H1 (cell line): ENCODE measurements at regions of chr6 and their contacts with region 1.

Region 1: GRCh38 chr6:6772751-6773150 is 184.2 kb downstream of the LY86 start:
- DNase-seq: peak in 1 of 2 experiments; percentile 53
- H3K4me3 ChIP-seq: no peak overlapping the region
- H3K27ac ChIP-seq: no peak overlapping the region
- H3K4me1 ChIP-seq: peaks cover 0 to 2% (median 0%) of the 10 kb centered on the region in 4 experiments; a peak in 2 of 7 replicates
- H3K27me3 ChIP-seq: no peaks in the 10 kb centered on the region
- CTCF ChIP-seq: no peak
- EP300 ChIP-seq: no peak
- POLR2A ChIP-seq: no peak
- RAD21 ChIP-seq: no peak

Region 2: GRCh38 chr6:6758915-6759654 is 13.7 kb before region 1 on chr6:
- CTCF ChIA-PET with region 1: interaction called, 12 read pairs
- POLR2A ChIA-PET with region 1: interaction called, 4 read pairs
- DNase-seq: peak in 1 of 2 experiments; percentile 74
- H3K4me3 ChIP-seq: peak overlapping the region; percentile 18 to 46 (median 30); a peak in 7 of 8 replicates
- H3K27ac ChIP-seq: peak overlapping the region; percentile 65
- H3K4me1 ChIP-seq: peaks cover 0 to 9% (median 6%) of the 10 kb centered on the region in 4 experiments; a peak in 6 of 7 replicates
- H3K27me3 ChIP-seq: no peaks in the 10 kb centered on the region
- CTCF ChIP-seq: peak in 2 of 3 experiments; percentile 48 to 64; a peak in 3 of 4 replicates
- EP300 ChIP-seq: peak in 1 of 2 experiments; percentile 77; a peak in 1 of 3 replicates
- POLR2A ChIP-seq: peak in 1 of 2 experiments; percentile 76; a peak in 2 of 3 replicates
- RAD21 ChIP-seq: peak; percentile 39 to 66; a peak in 3 of 4 replicates